ENCODE measurements at regions of chr9 and their contacts with region 1.

Region 1: GRCh38 chr9:129125476-129125875 is 14.3 kb downstream of the PTPA start:
- DNase-seq: peak; percentile 76
- H3K27ac ChIP-seq: peak overlapping the region; percentile 45
- CTCF ChIP-seq: no peak

Region 2: GRCh38 chr9:128412120-128412790 is 713.2 kb before region 1 on chr9:
- CTCF ChIA-PET with region 1: no interaction called
- POLR2A ChIA-PET with region 1: no interaction called
- DNase-seq: no peak
- H3K27ac ChIP-seq: no peak overlapping the region
- CTCF ChIP-seq: peak; percentile 41

Region 3: DNA sequence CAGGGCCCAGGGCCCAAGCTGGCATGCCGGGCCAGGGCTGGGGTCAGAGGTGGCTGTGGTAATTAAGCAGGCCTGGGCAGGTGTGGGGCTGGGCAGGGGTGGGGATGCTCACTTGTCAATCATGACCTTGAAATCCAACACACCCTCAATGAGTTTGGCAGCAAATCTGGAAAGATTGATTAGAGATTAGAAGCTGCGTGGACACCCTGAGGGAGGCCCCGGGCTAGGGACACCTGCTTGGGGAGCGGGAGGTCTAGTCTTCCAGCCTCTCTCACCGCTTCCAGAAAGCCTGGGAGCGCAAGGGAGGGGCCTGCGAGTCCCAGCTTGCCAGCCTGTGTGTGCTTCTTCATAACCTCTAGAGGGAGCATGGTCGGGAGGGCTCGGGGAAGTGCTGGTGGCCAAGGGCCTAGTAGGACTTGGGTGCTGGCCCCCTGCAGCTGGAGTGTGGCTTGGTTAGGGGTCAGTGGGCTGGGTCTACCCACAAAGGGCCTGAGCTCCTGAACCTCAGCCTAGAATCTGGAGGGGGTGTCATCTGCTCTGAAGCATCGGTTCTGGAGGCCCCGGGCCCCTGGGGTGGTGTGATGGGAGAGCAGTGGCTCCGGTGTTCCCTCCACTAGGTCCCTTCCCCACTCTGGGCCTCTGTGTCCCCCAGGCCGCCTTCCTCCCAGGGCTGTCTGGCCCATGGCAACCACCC is 22.4 kb before region 1 on chr9:
- CTCF ChIA-PET with region 1: interaction called, 12 read pairs
- POLR2A ChIA-PET with region 1: no interaction called
- DNase-seq: peak; percentile 94
- H3K27ac ChIP-seq: peak overlapping the region; percentile 68
- CTCF ChIP-seq: peak; percentile 83